RWPE1 (cell line): ENCODE measurements at regions of chr5 and their contacts with region 1.

Region 1: DNA sequence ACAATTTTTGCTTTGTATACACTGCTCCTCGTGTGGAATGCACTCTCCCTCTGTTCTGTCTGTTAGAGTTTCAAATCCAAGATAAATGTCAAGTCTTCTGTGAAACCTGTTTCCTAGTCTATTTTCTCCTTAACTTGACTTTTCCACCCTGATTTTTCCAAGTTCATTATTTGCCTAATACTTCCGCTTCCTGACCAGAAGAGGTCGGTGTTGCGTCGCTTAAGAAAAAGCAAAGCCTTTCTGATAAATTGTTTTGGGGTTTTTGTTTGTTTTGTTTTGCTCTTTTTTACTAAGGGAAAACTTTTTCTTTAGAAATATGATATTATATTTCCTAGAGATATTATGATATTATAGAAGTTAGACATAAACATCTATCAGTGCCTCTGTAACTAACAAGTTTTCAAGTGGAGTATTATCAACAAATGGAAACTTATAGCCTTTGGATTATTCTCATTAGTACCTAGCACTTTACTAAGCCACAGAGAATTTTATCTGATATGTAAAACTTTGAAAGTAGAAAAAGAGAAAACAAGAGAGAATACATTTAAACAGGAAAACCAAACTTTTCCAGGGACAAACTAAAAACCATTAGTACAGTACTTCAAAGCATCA is 55.8 kb downstream of the PHAX start:
- DNase-seq: peak; percentile 73
- H3K27ac ChIP-seq: no peak overlapping the region
- CTCF ChIP-seq: peak; percentile 95

Region 2: DNA sequence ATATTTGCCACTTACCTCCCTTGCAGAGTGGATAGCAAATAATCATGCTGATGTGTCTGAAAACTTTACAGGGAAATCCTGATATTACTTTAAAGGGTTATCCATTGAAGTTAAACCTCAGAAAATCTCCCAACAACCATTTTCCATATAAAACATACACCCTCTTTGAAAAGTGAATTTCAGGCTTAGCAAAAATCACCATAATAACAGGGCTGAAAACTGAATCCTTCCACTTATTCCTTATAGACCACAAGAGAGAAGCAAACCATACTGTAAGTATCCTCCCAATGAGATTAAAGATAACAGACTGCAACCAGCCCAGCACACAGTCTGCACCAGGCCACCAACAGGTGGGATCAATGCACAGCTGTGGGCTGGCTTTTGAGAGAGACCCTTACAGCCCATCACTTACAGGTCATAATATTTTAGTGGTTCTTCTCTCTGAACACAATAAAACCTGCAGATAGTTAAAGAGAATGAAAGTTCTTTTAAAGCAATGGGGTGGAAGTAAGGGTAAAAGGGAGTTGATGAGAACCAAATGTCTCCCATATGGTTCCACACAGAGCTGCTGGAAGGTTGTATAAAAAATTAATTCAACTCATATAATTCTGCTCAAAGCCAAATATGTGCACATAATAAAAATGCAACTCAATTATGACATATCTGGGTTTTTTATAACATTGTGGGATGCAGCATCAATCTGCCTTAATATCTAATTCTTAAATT is 609.5 kb before region 1 on chr5:
- CTCF ChIA-PET with region 1: no interaction called
- POLR2A ChIA-PET with region 1: no interaction called
- DNase-seq: no peak
- H3K27ac ChIP-seq: no peak overlapping the region
- CTCF ChIP-seq: no peak

Region 3: GRCh38 chr5:126624534-126624933 is 32.0 kb before region 1 on chr5:
- CTCF ChIA-PET with region 1: interaction called, 12 read pairs
- POLR2A ChIA-PET with region 1: no interaction called
- DNase-seq: peak; percentile 41
- H3K27ac ChIP-seq: no peak overlapping the region
- CTCF ChIP-seq: no peak

Region 4: GRCh38 chr5:126636956-126637355 is 19.5 kb before region 1 on chr5:
- CTCF ChIA-PET with region 1: no interaction called
- POLR2A ChIA-PET with region 1: no interaction called
- DNase-seq: no peak
- H3K27ac ChIP-seq: no peak overlapping the region
- CTCF ChIP-seq: no peak